PC-3 (cell line): ENCODE measurements at regions of chr1 and their contacts with region 1.

Region 1: GRCh38 chr1:226737819-226738420 is 1.2 kb downstream of the ITPKB start:
- DNase-seq: peak; percentile 61
- ATAC-seq: peak; percentile 58
- H3K4me3 ChIP-seq: peak overlapping the region; percentile 81
- H3K27ac ChIP-seq: peak overlapping the region; percentile 47
- H3K4me1 ChIP-seq: peaks cover 13% of the 10 kb centered on the region
- H3K27me3 ChIP-seq: no peaks in the 10 kb centered on the region
- CTCF ChIP-seq: no peak

Region 2: DNA sequence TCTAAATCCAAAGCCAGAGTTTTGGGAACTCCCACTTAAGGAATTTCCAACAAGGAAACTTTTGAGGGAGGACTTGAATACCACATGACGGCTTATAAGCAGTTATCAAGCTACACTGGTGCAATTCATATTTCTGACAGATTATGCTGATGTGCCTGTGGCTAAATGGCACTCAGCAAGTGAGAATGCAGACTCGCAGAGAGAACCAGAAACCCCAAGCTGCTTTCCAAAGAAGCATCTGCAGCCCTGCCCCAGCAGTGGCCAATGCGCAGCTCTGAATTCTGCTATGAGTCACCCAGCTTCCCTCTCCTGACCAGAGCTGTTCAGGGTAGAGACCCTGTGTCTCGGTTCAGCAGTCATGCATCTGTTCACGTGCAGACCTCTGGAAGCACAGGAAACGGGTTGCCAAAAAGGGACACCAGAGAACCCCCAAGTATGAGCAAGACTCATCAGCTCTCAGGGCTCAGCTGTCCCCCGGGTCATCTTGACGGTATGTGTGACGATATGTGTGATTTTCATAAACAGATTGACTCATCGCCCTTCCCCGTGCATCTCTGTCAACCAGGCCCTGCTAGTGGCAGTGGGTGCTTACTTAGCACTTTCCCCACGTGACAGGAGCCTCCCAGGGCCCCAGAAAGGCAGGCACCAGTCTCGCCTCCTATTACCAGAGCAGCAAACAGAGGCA is 75.1 kb before region 1 on chr1:
- CTCF ChIA-PET with region 1: no interaction called
- POLR2A ChIA-PET with region 1: no interaction called
- intact Hi-C with region 1: loop called (anchors 1 kb)
- DNase-seq: peak; percentile 90
- ATAC-seq: peak; percentile 94
- H3K4me3 ChIP-seq: peak overlapping the region; percentile 35; the same call in 1 of the 2 replicates
- H3K27ac ChIP-seq: peak overlapping the region; percentile 27
- H3K4me1 ChIP-seq: peaks cover 35% of the 10 kb centered on the region
- H3K27me3 ChIP-seq: no peaks in the 10 kb centered on the region
- CTCF ChIP-seq: no peak

Region 3: GRCh38 chr1:226784081-226785049 is 46.4 kb after region 1 on chr1:
- CTCF ChIA-PET with region 1: no interaction called
- POLR2A ChIA-PET with region 1: no interaction called
- intact Hi-C with region 1: loop called (anchors 2 kb)
- DNase-seq: peak; percentile 93
- ATAC-seq: peak; percentile 98
- H3K4me3 ChIP-seq: no peak overlapping the region
- H3K27ac ChIP-seq: peak overlapping the region; percentile 52
- H3K4me1 ChIP-seq: peaks cover 24% of the 10 kb centered on the region
- H3K27me3 ChIP-seq: no peaks in the 10 kb centered on the region
- CTCF ChIP-seq: no peak

Region 4: DNA sequence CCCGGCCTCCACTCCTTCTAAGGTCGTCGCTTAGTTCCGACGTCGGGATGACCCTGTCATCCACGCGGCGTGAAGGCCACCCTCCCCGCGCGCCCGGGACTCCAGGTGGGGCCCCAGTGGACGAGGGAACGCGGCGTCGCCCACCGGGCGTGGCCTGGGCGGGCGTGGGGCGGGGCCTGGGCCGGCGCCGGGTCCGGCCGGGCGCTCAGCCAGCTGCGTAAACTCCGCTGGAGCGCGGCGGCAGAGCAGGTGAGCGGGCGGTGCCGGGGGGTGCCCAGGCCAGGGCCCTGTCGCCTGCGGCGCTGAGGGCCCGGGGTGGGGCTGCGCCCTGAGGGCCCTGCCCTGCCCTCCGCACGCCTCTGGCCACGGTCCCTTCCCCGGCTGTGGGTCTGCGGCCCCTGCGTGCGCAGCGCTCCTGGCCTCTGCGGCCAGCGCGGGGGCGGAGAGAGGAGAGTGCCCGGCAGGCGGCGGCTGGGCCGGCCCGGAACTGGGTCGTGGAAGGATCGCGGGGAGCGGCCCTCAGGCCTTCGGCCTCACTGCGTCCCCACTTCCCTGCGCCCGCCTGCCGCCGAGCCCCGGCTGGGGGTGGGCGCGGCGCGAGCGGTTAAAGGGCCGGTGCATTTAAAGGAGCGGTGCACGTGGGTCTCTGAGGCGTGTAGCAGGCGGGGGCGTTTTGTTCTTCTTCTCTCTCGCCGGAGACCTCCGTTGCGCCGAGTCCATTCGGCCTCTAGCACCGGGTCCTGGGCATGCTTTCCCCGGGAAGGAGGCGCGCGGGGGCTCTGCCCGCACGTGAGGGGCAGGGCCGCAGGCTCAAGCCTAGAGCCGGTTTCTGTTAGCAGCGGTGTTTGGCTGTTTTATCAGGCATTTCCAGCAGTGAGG is 132.7 kb after region 1 on chr1 and contains the start of gene PSEN2:
- CTCF ChIA-PET with region 1: no interaction called
- POLR2A ChIA-PET with region 1: interaction called, 3 read pairs
- intact Hi-C with region 1: loop called (anchors 1 kb)
- DNase-seq: peak; percentile 92
- ATAC-seq: peak; percentile 74
- H3K4me3 ChIP-seq: peak within 1 kb of the TSS; percentile 81
- H3K27ac ChIP-seq: peak within 1 kb of the TSS; percentile 13
- H3K4me1 ChIP-seq: peaks cover 49% of the 10 kb centered on the region
- H3K27me3 ChIP-seq: no peaks in the 10 kb centered on the region
- CTCF ChIP-seq: peak; percentile 33; the same call in 1 of the 2 replicates
- total RNA-seq, gene PSEN2: 85.3 and 103 TPM in 2 replicates

Region 5: DNA sequence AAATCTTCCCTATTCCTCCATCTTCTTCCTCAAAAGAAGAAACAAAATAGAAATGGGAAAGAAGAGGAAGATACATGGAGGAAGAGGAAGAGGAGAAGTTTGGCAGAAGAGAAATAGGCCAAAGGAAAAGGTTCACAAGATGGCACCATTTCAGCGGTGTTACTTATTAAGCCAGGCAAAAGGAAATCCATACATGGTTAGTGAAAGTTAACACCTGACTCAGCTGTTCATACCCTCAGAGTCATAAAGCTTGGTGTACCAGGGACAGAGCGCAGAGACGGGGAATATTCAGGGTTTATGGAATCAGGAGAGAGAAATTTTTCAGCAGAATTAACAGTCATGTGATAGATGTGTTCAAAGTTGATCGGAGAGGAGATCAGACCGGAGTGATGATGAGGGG is 272.7 kb after region 1 on chr1:
- CTCF ChIA-PET with region 1: no interaction called
- POLR2A ChIA-PET with region 1: no interaction called
- intact Hi-C with region 1: no loop called
- DNase-seq: no peak
- ATAC-seq: no peak
- H3K4me3 ChIP-seq: no peak overlapping the region
- H3K27ac ChIP-seq: no peak overlapping the region
- H3K4me1 ChIP-seq: no peaks in the 10 kb centered on the region
- H3K27me3 ChIP-seq: no peaks in the 10 kb centered on the region
- CTCF ChIP-seq: no peak

Region 6: DNA sequence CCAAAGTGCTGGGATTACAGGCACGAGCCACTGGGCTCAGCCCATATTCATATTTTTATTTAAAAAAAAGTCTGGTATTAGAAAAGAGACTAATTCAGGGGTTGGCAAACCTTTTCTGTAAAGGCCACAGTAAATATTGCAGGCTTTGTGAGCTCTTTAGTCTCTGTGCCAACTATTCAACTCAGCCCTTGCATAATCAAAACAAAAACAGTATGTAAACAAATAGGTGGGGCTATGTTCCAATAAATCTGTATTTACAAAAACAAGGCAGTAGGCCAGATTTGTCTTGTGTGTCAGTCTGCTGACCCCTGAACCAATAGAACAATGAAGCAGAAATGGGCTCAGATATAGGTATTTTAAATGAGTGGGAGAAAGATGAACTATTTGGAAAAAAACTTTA is 531.0 kb after region 1 on chr1:
- CTCF ChIA-PET with region 1: no interaction called
- POLR2A ChIA-PET with region 1: no interaction called
- intact Hi-C with region 1: no loop called
- DNase-seq: peak; percentile 35
- ATAC-seq: peak; percentile 27; the same call in 1 of the 2 replicates
- H3K4me3 ChIP-seq: no peak overlapping the region
- H3K27ac ChIP-seq: no peak overlapping the region
- H3K4me1 ChIP-seq: 0 out of 2 replicates have a peak, but pooled peaks cover 4% of the 10 kb centered on the region
- H3K27me3 ChIP-seq: no peaks in the 10 kb centered on the region
- CTCF ChIP-seq: no peak

Region 7: GRCh38 chr1:227343727-227344551 is 606.0 kb after region 1 on chr1:
- CTCF ChIA-PET with region 1: no interaction called
- POLR2A ChIA-PET with region 1: interaction called, 26 read pairs
- intact Hi-C with region 1: no loop called
- DNase-seq: peak; percentile 82
- ATAC-seq: peak; percentile 96
- H3K4me3 ChIP-seq: peak overlapping the region; percentile 4; the same call in 1 of the 2 replicates
- H3K27ac ChIP-seq: no peak overlapping the region
- H3K4me1 ChIP-seq: peaks cover 16% of the 10 kb centered on the region
- H3K27me3 ChIP-seq: no peaks in the 10 kb centered on the region
- CTCF ChIP-seq: no peak